Activated T-helper 1 cell treated with anti-CD3 and anti-CD28 coated beads, Interleukin-12 subunit alpha, Interleukin-12 subunit beta, Interleukin-2, Interleukin-4 antibody, amounts not matched to agents 30 ng/mL and 10 ng/mL and 1 ng/mL, durations not matched to agents 14 hours and 24 hours and 36 hours (primary cell): ENCODE measurements at regions of chr17 and their contacts with region 1.

Region 1: DNA sequence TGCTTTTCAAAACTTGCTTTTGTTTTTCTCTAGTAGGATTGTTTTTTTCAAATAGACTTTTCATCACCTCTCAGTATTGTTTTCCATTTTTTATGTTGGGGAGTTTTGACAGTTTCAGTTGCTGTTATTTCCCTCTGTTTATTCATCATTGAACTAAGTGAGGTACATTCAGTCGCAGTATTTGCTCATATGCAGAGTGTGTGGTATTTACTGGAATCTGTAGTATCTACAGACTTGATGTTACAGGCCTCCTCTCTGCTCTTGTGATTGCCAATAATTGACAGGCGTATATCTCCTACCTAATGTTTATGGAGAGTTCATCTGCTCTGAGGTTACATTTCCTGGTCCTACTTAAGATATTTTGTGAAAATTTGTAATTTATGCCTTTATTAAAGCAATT is 49.6 kb downstream of the COX10 start:
- DNase-seq: peak; percentile 31
- H3K4me3 Mint-ChIP-seq: peak overlapping the region; percentile 55
- H3K27ac Mint-ChIP-seq: peak overlapping the region; percentile 94
- H3K4me1 Mint-ChIP-seq: peaks cover 96% of the 10 kb centered on the region
- H3K27me3 Mint-ChIP-seq: no peaks in the 10 kb centered on the region

Region 2: DNA sequence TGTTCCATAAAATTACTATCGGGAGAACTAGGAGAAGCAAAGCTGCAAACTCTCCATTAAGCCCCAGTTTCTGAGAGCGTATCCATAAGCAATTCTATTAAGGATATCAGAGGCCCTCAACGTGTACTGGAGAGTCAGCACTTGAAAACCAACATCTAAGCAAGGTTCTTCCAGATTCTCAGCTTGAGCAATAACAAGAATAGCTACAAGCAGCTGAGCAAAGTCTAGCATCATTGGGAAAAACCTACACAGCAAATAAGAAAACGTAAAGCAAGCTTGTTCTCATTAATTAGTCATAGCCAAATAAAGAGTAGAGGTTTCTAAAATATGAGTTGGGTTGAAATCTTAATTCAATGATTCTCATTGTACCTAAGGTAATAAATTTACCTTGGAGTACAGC is 76.5 kb before region 1 on chr17:
- intact Hi-C with region 1: loop called (anchors 2 kb)
- DNase-seq: no peak
- H3K4me3 Mint-ChIP-seq: no peak overlapping the region
- H3K27ac Mint-ChIP-seq: no peak overlapping the region
- H3K4me1 Mint-ChIP-seq: peaks cover 65% of the 10 kb centered on the region
- H3K27me3 Mint-ChIP-seq: no peaks in the 10 kb centered on the region

Region 3: GRCh38 chr17:14080847-14081251 is 38.1 kb before region 1 on chr17:
- intact Hi-C with region 1: loop called (anchors 2 kb)
- DNase-seq: no peak
- H3K4me3 Mint-ChIP-seq: no peak overlapping the region
- H3K27ac Mint-ChIP-seq: peak overlapping the region; percentile 78
- H3K4me1 Mint-ChIP-seq: peaks cover 46% of the 10 kb centered on the region
- H3K27me3 Mint-ChIP-seq: no peaks in the 10 kb centered on the region

Region 4: GRCh38 chr17:14135906-14136590 is 17.1 kb after region 1 on chr17:
- intact Hi-C with region 1: loop called (anchors 2 kb)
- DNase-seq: no peak
- H3K4me3 Mint-ChIP-seq: no peak overlapping the region
- H3K27ac Mint-ChIP-seq: no peak overlapping the region
- H3K4me1 Mint-ChIP-seq: peaks cover 24% of the 10 kb centered on the region
- H3K27me3 Mint-ChIP-seq: no peaks in the 10 kb centered on the region

Region 5: DNA sequence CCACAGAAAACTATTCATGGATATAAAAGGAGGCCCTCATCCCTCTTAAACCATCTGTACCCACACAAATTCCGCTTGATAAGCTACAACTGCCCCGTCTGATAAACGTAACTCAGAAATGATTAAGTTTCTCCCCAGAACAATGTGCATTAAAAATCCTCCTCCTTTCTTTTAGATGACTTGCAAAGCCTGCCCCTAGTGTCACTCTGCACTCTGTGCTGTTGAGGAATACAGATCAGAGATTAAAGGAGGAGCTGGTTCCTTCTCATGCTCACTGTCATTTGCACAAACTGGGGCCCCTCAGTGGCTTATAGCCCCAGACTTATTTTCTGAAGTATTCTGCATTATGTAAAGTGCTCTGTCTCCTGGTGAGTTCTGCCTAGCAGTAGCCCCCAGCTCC is 84.4 kb after region 1 on chr17:
- intact Hi-C with region 1: loop called (anchors 1 kb)
- DNase-seq: peak; percentile 32
- H3K4me3 Mint-ChIP-seq: peak overlapping the region; percentile 24
- H3K27ac Mint-ChIP-seq: peak overlapping the region; percentile 85
- H3K4me1 Mint-ChIP-seq: peaks cover 90% of the 10 kb centered on the region
- H3K27me3 Mint-ChIP-seq: no peaks in the 10 kb centered on the region

Region 6: GRCh38 chr17:14228903-14229302 is 110.0 kb after region 1 on chr17:
- intact Hi-C with region 1: no loop called
- DNase-seq: no peak
- H3K4me3 Mint-ChIP-seq: no peak overlapping the region
- H3K27ac Mint-ChIP-seq: no peak overlapping the region
- H3K4me1 Mint-ChIP-seq: peaks cover 4% of the 10 kb centered on the region
- H3K27me3 Mint-ChIP-seq: no peaks in the 10 kb centered on the region